Posterior vena cava (tissue), 2 donors: ENCODE measurements at regions of chr2 and their contacts with region 1.

Region 1: GRCh38 chr2:118861731-118862130 is 14.3 kb upstream of the EN1 start:
- DNase-seq: no peak

Region 2: GRCh38 chr2:118032169-118033013 is 829.3 kb before region 1 on chr2:
- intact Hi-C with region 1: loop called in 1 of 2 experiments (anchors 5 kb)
- DNase-seq: no peak

Region 3: GRCh38 chr2:118221666-118222594 is 639.8 kb before region 1 on chr2:
- intact Hi-C with region 1: loop called (anchors 5 kb)
- DNase-seq: no peak

Region 4: DNA sequence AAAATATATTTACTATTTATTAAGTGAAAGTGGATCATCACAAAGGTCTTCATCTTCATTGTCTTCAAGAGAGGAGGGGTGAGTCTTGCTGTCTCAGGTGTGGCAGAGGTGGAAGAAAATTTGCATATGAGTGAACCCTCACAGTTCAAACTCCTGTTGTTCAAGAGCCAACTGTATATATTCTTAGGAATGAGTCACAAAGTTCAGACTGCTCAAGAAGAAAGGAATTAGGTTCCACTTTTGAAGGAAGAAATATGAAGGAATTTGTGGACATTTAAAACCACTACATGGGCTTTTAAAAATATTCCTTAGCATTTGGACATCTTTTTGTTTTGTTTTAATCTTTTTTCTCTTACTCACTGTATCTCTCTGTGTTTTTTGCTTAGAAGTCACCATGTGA is 560.9 kb before region 1 on chr2:
- intact Hi-C with region 1: no loop called
- DNase-seq: no peak